HepG2 (cell line): ENCODE measurements at regions of chr3 and their contacts with region 1.

Region 1: GRCh38 chr3:78529601-78530000 is 1238.2 kb downstream of the ROBO1 start:
- DNase-seq: no peak
- ATAC-seq: no peak
- H3K4me3 ChIP-seq: no peak overlapping the region
- H3K27ac ChIP-seq: no peak overlapping the region
- H3K4me1 ChIP-seq: no peaks in the 10 kb centered on the region
- H3K27me3 ChIP-seq: no peaks in the 10 kb centered on the region
- CTCF ChIP-seq: no peak
- EP300 ChIP-seq: no peak
- POLR2A ChIP-seq: no peak
- RAD21 ChIP-seq: no peak

Region 2: GRCh38 chr3:78427303-78427702 is 102.3 kb before region 1 on chr3:
- CTCF ChIA-PET with region 1: no interaction called
- POLR2A ChIA-PET with region 1: no interaction called
- in situ Hi-C with region 1: no loop called
- intact Hi-C with region 1: no loop called
- DNase-seq: no peak
- ATAC-seq: no peak
- H3K4me3 ChIP-seq: no peak overlapping the region
- H3K27ac ChIP-seq: no peak overlapping the region
- H3K4me1 ChIP-seq: no peaks in the 10 kb centered on the region
- H3K27me3 ChIP-seq: no peaks in the 10 kb centered on the region
- CTCF ChIP-seq: no peak
- EP300 ChIP-seq: no peak
- POLR2A ChIP-seq: no peak
- RAD21 ChIP-seq: no peak

Region 3: GRCh38 chr3:78506581-78507195 is 22.9 kb before region 1 on chr3:
- CTCF ChIA-PET with region 1: no interaction called
- POLR2A ChIA-PET with region 1: no interaction called
- in situ Hi-C with region 1: no loop called
- intact Hi-C with region 1: no loop called
- DNase-seq: no peak
- ATAC-seq: peak; percentile 90
- H3K4me3 ChIP-seq: peak overlapping the region; percentile 22 to 40 (median 25); a peak in 4 of 6 replicates
- H3K27ac ChIP-seq: peak overlapping the region; percentile 57
- H3K4me1 ChIP-seq: peaks cover 27% of the 10 kb centered on the region
- H3K27me3 ChIP-seq: no peaks in the 10 kb centered on the region
- CTCF ChIP-seq: no peak
- EP300 ChIP-seq: no peak
- POLR2A ChIP-seq: no peak
- RAD21 ChIP-seq: no peak

Region 4: DNA sequence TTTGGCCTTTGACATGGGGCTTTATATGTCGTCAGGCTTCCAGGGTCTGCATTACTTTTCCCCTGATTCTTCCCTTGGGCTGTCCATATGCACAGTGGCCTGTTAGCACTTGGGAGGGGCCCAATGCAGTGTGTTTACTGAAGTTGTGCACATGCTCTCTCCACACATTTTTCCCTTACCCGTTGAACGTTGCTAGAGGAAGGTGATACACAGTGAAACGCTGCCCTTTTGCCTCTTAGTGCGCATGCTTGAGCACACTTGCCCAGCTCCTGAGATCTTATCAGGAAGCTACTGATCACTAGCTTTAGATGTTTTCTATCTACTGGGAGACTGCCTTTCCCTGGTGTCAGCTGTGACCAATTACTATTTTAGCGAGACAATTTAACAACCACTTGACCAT is 40.2 kb after region 1 on chr3:
- CTCF ChIA-PET with region 1: no interaction called
- POLR2A ChIA-PET with region 1: no interaction called
- in situ Hi-C with region 1: no loop called
- intact Hi-C with region 1: no loop called
- DNase-seq: peak; percentile 17
- ATAC-seq: peak; percentile 78
- H3K4me3 ChIP-seq: no peak overlapping the region
- H3K27ac ChIP-seq: no peak overlapping the region
- H3K4me1 ChIP-seq: no peaks in the 10 kb centered on the region
- H3K27me3 ChIP-seq: peaks cover 0 to 2% of the 10 kb centered on the region in 2 experiments; a peak in 2 of 5 replicates
- CTCF ChIP-seq: no peak
- EP300 ChIP-seq: no peak
- POLR2A ChIP-seq: no peak
- RAD21 ChIP-seq: no peak

Region 5: DNA sequence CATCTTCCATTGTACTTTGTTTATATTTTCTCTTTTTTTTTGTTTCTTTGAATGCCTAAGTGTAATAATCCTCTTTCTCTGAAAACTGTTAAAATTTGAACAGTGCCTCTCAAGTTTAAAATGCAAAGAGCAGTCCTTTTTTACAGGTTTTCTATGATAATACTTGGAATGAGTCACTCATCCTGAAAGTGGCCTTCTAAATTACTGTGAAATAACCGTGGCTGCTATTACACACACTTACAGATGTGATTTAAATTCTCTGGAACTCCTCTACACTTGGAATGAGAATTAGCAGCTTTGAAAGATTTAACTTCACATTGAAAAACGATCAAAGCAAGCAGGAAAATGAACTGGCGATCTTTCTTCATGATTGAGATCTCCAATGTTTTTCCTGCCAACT is 1132.3 kb after region 1 on chr3:
- CTCF ChIA-PET with region 1: no interaction called
- POLR2A ChIA-PET with region 1: no interaction called
- in situ Hi-C with region 1: no loop called
- intact Hi-C with region 1: loop called (anchors 10 kb)
- DNase-seq: no peak
- ATAC-seq: no peak
- H3K4me3 ChIP-seq: no peak overlapping the region
- H3K27ac ChIP-seq: no peak overlapping the region
- H3K4me1 ChIP-seq: no peaks in the 10 kb centered on the region
- H3K27me3 ChIP-seq: no peaks in the 10 kb centered on the region
- CTCF ChIP-seq: no peak
- EP300 ChIP-seq: no peak
- POLR2A ChIP-seq: no peak
- RAD21 ChIP-seq: no peak